Dendritic cell treated with granulocyte-macrophage colony-stimulating factor and Interleukin-4, amounts not matched to agents 40 ng/mL and 50 ng/mL, for 4 days (primary cell): ENCODE measurements at regions of chr2 and their contacts with region 1.

Region 1: GRCh38 chr2:7377916-7378569 is 460.8 kb downstream of the RNF144A start:
- H3K4me3 Mint-ChIP-seq: no peak overlapping the region
- H3K27ac Mint-ChIP-seq: no peak overlapping the region
- H3K4me1 Mint-ChIP-seq: no peaks in the 10 kb centered on the region
- H3K27me3 Mint-ChIP-seq: peaks cover 4% of the 10 kb centered on the region

Region 2: DNA sequence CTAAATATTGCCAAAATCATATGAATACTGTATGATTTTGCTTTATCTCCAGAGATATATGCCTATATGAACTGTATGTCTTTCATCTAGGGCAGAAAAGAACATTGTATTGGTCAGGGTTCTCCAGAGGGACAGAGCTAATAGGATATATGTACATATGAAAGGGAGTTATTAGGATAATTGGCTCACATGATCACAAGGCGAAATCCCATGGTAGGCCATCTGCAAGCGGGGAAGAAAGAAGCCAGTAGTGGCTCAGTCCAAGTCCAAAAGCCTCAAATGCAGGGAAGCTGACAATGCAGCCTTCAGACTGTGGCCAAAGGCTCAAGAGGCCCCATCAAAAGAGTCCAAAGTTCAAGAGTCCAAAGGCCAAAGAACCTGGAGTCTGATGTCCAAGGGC is 250.9 kb before region 1 on chr2:
- intact Hi-C with region 1: loop called (anchors 10 kb)
- H3K4me3 Mint-ChIP-seq: no peak overlapping the region
- H3K27ac Mint-ChIP-seq: no peak overlapping the region
- H3K4me1 Mint-ChIP-seq: no peaks in the 10 kb centered on the region
- H3K27me3 Mint-ChIP-seq: no peaks in the 10 kb centered on the region

Region 3: GRCh38 chr2:7417845-7418742 is 40.1 kb after region 1 on chr2:
- intact Hi-C with region 1: no loop called
- H3K4me3 Mint-ChIP-seq: no peak overlapping the region
- H3K27ac Mint-ChIP-seq: no peak overlapping the region
- H3K4me1 Mint-ChIP-seq: peaks cover 32% of the 10 kb centered on the region
- H3K27me3 Mint-ChIP-seq: no peaks in the 10 kb centered on the region